ENCODE measurements at regions of chr2 and their contacts with region 1.

Region 1: DNA sequence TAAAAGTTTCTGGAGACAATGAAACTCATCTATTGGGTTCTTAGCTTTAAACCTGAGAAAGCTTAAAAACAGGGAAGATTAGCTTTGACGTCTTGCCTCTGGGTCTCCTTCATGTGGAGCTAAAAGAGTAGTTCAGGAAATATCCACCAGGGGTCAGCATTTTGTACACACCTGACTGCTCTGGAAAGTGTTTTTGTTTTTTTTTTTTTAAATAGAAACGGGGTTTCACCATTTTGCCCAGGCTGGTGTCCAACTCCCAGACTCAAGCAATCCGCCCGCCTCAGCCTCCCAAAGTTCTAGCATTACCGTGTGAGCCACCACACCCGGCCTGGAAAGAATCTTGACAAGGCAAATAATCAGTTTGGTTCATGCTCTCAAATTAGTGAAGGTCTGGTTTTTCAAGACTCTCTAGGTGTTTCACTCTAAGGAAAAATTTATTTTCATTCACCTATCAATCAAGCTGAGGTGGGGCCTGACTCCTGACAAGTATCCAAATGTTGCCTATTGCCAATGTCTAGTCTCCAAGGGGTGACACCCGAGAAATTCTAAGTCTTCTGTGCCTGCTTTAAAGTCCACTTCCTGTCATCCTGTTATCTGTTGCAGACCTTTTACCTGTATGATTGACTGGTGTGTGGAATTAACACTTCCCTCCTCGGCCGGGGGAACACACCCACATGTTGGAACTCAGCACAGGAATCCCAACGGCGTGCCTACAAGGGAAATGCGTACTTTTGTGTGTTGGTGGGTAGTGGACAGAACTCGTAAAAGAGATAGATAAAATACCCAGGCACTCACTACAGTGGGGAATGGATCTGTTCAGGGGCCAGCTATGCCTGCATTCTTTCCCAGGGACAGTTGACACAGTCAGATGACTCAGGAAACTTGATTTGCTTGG is 11.3 kb downstream of the IL1RN start:
- DNase-seq: peak; percentile 52 to 76
- ATAC-seq: peak; percentile 65 to 88; a peak in 5 of 6 replicates
- H3K4me3 ChIP-seq: no peak overlapping the region
- H3K27ac ChIP-seq: peak overlapping the region; percentile 44 to 66; a peak in 5 of 6 replicates
- H3K4me1 ChIP-seq: 0 out of 3 replicates have a peak, but pooled peaks cover 4% of the 10 kb centered on the region
- CTCF ChIP-seq: peak; percentile 87
- EP300 ChIP-seq: no peak
- POLR2A ChIP-seq: no peak
- RAD21 ChIP-seq: peak; percentile 69 to 74

Region 2: GRCh38 chr2:112714836-112715631 is 423.6 kb before region 1 on chr2:
- CTCF ChIA-PET with region 1: no interaction called
- POLR2A ChIA-PET with region 1: no interaction called
- DNase-seq: peak; percentile 35 to 64
- ATAC-seq: peak; percentile 71 to 85; a peak in 4 of 6 replicates
- H3K4me3 ChIP-seq: no peak overlapping the region
- H3K27ac ChIP-seq: peak overlapping the region; percentile 37 to 76; a peak in 5 of 6 replicates
- H3K4me1 ChIP-seq: peaks cover 17% of the 10 kb centered on the region
- CTCF ChIP-seq: no peak
- EP300 ChIP-seq: no peak
- POLR2A ChIP-seq: no peak
- RAD21 ChIP-seq: no peak

Region 3: DNA sequence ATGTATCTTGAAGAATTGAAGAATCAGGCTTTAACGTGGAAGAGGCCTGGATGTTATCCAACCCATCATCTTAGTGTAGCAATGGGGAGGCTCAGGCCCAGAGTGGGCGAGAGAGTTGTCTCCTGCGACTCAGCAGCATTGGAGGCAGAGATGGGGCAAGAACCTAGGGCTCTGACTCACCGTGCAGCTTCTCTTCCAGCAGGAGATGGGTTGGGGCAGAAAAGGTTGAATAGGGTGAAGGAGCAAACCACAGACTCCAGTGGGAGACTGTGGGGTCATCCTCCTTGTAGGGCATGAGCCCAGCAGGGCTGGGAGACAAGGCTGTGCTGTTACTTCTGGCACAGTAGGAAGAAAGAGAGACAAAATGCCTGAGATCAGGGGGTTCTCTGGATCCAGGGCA is 78.3 kb before region 1 on chr2:
- CTCF ChIA-PET with region 1: no interaction called
- POLR2A ChIA-PET with region 1: no interaction called
- DNase-seq: no peak
- ATAC-seq: peak in 1 of 2 experiments; percentile 27; a peak in 1 of 6 replicates
- H3K4me3 ChIP-seq: no peak overlapping the region
- H3K27ac ChIP-seq: no peak overlapping the region
- H3K4me1 ChIP-seq: no peaks in the 10 kb centered on the region
- CTCF ChIP-seq: no peak
- EP300 ChIP-seq: no peak
- POLR2A ChIP-seq: no peak
- RAD21 ChIP-seq: no peak

Region 4: GRCh38 chr2:113117541-113118262 is 21.0 kb before region 1 on chr2:
- CTCF ChIA-PET with region 1: interaction called, 65 read pairs
- POLR2A ChIA-PET with region 1: no interaction called
- DNase-seq: no peak
- ATAC-seq: no peak
- H3K4me3 ChIP-seq: no peak overlapping the region
- H3K27ac ChIP-seq: no peak overlapping the region
- H3K4me1 ChIP-seq: no peaks in the 10 kb centered on the region
- CTCF ChIP-seq: no peak
- EP300 ChIP-seq: no peak
- POLR2A ChIP-seq: no peak
- RAD21 ChIP-seq: no peak

Region 5: DNA sequence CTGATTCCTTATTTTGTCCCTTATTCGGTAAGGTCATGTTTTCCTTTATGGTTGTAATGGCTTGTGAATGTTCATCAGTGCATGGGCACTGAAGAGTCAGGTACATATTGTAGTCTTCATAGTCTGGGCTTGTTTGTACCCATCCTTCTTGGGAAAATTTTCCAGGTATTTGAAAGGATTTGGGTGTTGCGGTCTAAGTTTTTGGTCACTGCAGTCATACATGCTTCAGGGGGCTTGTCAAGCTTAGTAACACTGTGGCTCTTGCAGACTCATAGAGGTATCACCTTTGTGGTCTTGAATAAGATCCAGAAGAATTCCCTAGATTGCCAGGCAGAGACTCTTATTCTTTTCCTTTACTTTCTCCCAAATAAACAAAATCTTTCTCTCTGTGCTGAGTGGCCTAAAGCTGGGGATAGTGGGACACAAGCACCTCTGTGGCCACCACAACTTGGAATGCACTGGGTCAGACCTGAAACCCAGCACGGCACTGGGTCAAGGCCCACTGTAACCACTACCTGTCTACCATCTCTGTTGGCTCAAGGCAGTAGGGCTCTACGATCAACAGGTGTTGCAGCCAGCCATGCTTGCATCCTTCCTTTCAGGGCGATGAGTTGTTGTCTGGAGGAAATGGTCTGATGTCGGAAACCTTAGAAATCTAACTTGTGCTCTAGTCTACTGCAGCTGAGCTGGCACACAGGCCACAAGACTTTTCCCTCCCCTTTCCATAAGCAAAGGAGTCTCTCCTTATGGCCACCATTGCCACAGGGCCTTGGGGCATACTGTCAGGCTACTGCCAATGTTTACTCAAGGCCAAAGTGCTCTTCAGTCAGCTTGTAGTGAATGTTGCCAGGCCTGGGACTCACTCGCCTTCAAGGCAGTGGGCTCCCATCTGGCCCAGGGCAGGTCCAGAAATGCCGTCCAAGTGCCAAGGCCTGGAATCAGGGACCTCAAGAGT is 10.2 kb after region 1 on chr2:
- CTCF ChIA-PET with region 1: interaction called, 42 read pairs
- POLR2A ChIA-PET with region 1: no interaction called
- DNase-seq: no peak
- ATAC-seq: no peak
- H3K4me3 ChIP-seq: no peak overlapping the region
- H3K27ac ChIP-seq: no peak overlapping the region
- H3K4me1 ChIP-seq: no peaks in the 10 kb centered on the region
- CTCF ChIP-seq: no peak
- EP300 ChIP-seq: no peak
- POLR2A ChIP-seq: no peak
- RAD21 ChIP-seq: no peak

Region 6: DNA sequence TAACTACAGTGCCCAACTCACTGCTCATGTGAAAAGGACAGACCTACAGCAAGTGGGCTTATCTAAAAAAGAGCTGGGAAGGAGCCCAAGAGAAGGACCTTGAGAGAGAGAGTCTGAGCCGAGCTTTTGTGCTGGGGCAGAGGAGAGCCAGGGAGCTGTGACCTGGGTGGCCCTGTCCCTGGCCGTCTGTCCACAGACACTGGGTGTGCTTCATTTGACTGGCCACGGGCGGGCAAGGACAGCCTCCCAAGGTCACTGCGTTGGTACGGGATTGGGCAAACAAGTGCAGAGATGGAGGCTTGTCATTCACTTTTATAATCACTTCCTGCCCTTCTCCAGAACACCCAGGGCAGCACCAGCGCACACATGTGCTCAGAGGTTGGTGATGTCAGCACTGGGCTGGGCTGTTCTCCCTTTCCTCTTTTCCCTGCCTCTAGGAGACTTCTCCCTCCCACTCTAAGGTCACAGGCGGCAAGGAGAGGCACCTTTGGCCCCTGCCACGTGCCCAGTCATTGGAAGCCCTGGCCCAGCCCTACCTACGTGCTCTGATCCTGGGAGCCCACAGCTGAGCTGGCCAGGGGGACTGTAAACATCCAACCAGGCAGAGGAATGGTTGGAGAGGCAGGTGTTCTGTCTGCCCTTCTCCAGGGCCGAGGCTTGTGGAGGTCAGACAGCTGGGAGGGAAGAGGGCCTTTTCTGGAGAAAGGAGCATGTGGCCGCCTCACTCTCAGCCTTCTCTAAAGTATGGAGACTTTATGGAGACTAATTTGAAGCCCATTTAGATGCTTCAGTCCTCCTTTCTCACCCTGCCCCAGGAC is 28.6 kb after region 1 on chr2:
- CTCF ChIA-PET with region 1: interaction called, 40 read pairs
- POLR2A ChIA-PET with region 1: no interaction called
- DNase-seq: no peak
- ATAC-seq: peak; percentile 71 to 72; a peak in 5 of 6 replicates
- H3K4me3 ChIP-seq: no peak overlapping the region
- H3K27ac ChIP-seq: no peak overlapping the region
- H3K4me1 ChIP-seq: no peaks in the 10 kb centered on the region
- CTCF ChIP-seq: no peak
- EP300 ChIP-seq: no peak
- POLR2A ChIP-seq: no peak
- RAD21 ChIP-seq: no peak

Region 7: GRCh38 chr2:113248997-113249770 is 110.5 kb after region 1 on chr2:
- CTCF ChIA-PET with region 1: interaction called, 11 read pairs
- POLR2A ChIA-PET with region 1: no interaction called
- DNase-seq: peak; percentile 67 to 83
- ATAC-seq: peak; percentile 67 to 92; a peak in 4 of 6 replicates
- H3K4me3 ChIP-seq: no peak overlapping the region
- H3K27ac ChIP-seq: peak overlapping the region; percentile 97 to 98
- H3K4me1 ChIP-seq: peaks cover 24% of the 10 kb centered on the region
- CTCF ChIP-seq: peak; percentile 82
- EP300 ChIP-seq: no peak
- POLR2A ChIP-seq: no peak
- RAD21 ChIP-seq: peak; percentile 95 to 97

Region 8: GRCh38 chr2:113390124-113390849 is 251.6 kb after region 1 on chr2:
- CTCF ChIA-PET with region 1: interaction called, 76 read pairs
- POLR2A ChIA-PET with region 1: interaction called, 9 read pairs
- DNase-seq: peak; percentile 14 to 85
- ATAC-seq: peak; percentile 77 to 89
- H3K4me3 ChIP-seq: no peak overlapping the region
- H3K27ac ChIP-seq: peak overlapping the region; percentile 12 to 59; a peak in 4 of 6 replicates
- H3K4me1 ChIP-seq: peaks cover 6% of the 10 kb centered on the region; the same call in 2 of the 3 replicates
- CTCF ChIP-seq: peak; percentile 95
- EP300 ChIP-seq: no peak
- POLR2A ChIP-seq: no peak
- RAD21 ChIP-seq: peak; percentile 74 to 82